Activated CD4-positive, alpha-beta memory T cell treated with anti-CD3 and anti-CD28 coated beads, Interleukin-2, amount 10 ng/mL, durations not matched to agents 7 days and 5 days (primary cell): ENCODE measurements at regions of chr1 and their contacts with region 1.

Region 1: DNA sequence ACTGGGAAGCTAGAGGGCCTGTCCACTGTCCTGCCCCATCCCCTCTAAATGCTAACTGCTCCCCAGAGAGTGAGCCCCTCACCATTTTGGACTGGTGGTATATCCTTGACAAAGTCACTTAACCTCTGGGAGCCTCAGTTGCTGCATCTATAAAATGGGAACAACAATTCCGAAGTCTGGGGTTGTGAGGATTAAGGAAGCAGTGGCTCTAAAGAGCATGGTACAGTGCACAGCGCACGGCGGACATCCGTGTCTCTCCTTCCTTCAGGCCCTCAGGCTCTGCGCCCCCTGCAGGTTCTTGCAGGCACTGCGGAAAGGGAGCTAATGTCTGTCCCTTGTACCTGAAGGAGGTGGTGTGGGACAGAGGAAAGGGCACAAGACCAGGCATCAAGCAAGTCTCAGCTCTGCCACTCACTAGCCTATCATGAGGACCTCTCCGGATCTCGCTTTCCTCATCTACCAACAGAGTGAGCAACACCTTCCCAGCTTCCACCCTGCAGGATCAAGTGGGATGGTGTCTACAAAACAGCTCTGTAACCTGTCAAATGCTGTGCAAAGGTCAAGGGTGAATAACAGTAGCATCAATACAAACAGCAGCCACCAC is 20.1 kb downstream of the ECE1 start:
- DNase-seq: peak; percentile 84
- H3K4me3 Mint-ChIP-seq: no peak overlapping the region
- H3K27ac Mint-ChIP-seq: no peak overlapping the region
- H3K4me1 Mint-ChIP-seq: peaks cover 15% of the 10 kb centered on the region
- H3K27me3 Mint-ChIP-seq: no peaks in the 10 kb centered on the region

Region 2: DNA sequence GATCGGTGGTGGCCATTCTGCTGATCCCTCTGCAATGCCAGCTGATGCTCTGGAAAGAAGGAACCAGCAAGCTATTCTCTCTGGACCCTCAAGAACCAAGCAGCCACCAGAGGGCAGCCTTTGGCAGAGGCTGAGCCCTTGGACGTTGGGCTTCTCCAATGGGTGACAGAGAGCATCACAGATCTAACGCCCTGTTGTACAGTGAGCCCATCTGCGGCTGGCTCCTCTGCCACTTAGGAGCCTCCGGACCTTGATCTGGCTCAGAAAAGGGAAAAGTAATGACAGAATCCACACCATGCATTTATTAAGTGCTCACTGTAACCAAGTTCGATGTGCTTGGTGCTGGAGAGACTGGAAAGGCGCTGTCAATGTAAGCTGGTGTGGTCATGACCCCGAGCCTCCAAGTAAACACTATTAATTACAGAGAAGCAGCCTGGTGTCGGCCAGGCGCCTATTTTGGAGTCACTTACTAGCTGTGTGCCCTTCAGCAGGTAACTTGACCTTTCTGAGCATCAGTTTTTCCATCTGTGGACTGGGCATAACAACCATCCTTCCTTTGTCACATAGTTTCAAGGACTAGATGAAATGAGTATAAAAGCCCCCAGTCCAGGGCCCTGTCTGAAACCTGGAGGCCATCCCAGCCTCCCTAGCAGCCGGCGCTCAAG is 14.8 kb before region 1 on chr1:
- CTCF ChIA-PET with region 1: interaction called, 115 read pairs
- POLR2A ChIA-PET with region 1: interaction called, 8 read pairs
- DNase-seq: peak; percentile 85
- H3K4me3 Mint-ChIP-seq: no peak overlapping the region
- H3K27ac Mint-ChIP-seq: peak overlapping the region; percentile 17
- H3K4me1 Mint-ChIP-seq: peaks cover 40% of the 10 kb centered on the region
- H3K27me3 Mint-ChIP-seq: no peaks in the 10 kb centered on the region

Region 3: GRCh38 chr1:21308847-21309652 is 38.9 kb after region 1 on chr1:
- CTCF ChIA-PET with region 1: interaction called, 15 read pairs
- POLR2A ChIA-PET with region 1: no interaction called
- DNase-seq: no peak
- H3K4me3 Mint-ChIP-seq: no peak overlapping the region
- H3K27ac Mint-ChIP-seq: peak overlapping the region; percentile 26
- H3K4me1 Mint-ChIP-seq: peaks cover 43% of the 10 kb centered on the region
- H3K27me3 Mint-ChIP-seq: no peaks in the 10 kb centered on the region

Region 4: DNA sequence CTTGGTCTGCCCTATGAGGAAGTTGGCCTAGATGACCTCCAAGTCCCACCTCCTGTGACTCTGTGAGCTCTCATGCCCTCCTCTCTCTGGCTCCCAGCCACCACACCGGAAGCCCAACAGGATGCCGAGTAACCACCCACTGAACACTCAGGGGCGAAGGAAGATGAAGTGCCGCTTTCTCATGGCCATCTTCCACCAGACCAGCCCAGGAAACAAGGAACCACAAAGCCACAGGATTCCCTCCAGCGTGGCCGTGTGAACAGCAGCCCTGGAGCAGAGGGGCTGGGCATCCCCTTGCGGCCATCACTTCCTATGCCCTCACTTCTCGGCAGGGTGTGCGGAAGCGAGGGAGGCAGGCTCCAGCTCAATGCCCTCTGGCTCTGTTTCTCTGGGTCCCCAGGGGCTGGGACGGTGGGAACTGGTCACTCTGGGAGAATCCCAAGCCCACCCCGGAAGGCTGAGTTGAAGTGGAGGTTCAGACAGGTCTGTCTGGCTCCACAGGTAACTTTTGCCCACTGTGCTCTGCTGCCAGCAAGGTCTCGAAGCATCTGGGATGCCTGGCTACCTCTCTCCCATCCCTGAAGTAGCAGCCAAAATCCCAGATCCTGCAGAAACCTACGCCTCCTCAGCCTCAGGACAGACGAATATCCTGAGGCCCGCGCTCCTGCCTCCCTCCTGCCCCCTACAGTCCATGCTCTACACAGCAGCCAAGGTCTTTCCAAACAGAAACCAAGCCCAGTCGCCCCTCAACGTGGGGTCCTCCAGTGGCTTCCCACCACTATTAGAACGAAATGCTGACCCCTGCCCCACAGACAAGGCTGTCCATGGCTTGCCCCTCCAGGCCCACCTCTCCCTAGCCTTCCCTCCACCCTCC is 64.3 kb after region 1 on chr1:
- CTCF ChIA-PET with region 1: interaction called, 23 read pairs
- POLR2A ChIA-PET with region 1: no interaction called
- DNase-seq: peak; percentile 89
- H3K4me3 Mint-ChIP-seq: peak overlapping the region; percentile 73
- H3K27ac Mint-ChIP-seq: peak overlapping the region; percentile 94
- H3K4me1 Mint-ChIP-seq: peaks cover 89% of the 10 kb centered on the region
- H3K27me3 Mint-ChIP-seq: no peaks in the 10 kb centered on the region

Region 5: DNA sequence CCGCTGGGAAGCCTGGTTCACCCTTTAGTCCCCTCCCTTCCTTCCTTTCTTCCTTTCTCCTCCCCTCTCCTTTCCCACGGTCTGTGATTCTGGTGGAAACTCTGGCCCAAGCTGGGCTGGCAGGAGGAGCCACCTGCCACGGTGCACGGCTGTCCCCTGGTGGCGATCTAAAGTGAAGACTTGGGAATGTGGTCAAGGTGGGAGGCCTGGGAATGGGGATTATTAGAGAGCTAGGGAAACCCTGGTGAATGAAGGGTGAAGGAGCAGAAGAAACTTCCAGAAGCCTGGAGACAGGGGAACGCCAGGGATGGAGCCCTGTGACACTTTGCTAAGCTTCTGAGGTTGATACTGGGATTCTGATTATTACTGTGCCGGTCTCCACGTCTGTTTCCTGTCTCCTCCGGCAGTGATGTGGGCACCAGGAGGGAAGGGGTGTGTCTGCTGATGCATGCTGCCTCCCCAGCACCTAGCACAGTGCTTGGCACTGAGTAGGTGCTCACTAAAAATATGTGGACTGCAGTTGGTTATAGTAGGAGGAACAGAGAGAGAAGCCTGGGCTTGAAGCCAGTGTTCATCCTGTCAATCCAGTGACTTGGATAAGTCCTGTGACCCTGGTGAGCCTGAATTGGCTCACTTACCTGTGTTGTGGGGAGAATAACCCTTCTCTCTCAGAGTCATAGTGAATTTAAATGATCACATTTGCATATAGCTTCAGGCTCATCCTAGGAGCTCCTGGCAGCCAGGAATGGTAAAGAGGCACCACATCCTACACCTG is 98.5 kb after region 1 on chr1:
- CTCF ChIA-PET with region 1: interaction called, 19 read pairs
- POLR2A ChIA-PET with region 1: no interaction called
- DNase-seq: peak; percentile 60
- H3K4me3 Mint-ChIP-seq: no peak overlapping the region
- H3K27ac Mint-ChIP-seq: no peak overlapping the region
- H3K4me1 Mint-ChIP-seq: peaks cover 9% of the 10 kb centered on the region
- H3K27me3 Mint-ChIP-seq: no peaks in the 10 kb centered on the region